ENCODE measurements at regions of chr1 and their contacts with region 1.

Region 1: GRCh38 chr1:110460253-110461220 is 9.6 kb downstream of the PROK1 start:
- DNase-seq: peak; percentile 89
- ATAC-seq: peak; percentile 90
- H3K4me3 Mint-ChIP-seq: no peak overlapping the region
- H3K27ac Mint-ChIP-seq: no peak overlapping the region
- H3K4me1 Mint-ChIP-seq: no peaks in the 10 kb centered on the region
- H3K27me3 Mint-ChIP-seq: peaks cover 2% of the 10 kb centered on the region

Region 2: GRCh38 chr1:110196917-110197765 is 263.4 kb before region 1 on chr1:
- CTCF ChIA-PET with region 1: interaction called, 88 read pairs
- DNase-seq: peak; percentile 68
- ATAC-seq: peak; percentile 92
- H3K4me3 Mint-ChIP-seq: no peak overlapping the region
- H3K27ac Mint-ChIP-seq: no peak overlapping the region
- H3K4me1 Mint-ChIP-seq: no peaks in the 10 kb centered on the region
- H3K27me3 Mint-ChIP-seq: no peaks in the 10 kb centered on the region

Region 3: DNA sequence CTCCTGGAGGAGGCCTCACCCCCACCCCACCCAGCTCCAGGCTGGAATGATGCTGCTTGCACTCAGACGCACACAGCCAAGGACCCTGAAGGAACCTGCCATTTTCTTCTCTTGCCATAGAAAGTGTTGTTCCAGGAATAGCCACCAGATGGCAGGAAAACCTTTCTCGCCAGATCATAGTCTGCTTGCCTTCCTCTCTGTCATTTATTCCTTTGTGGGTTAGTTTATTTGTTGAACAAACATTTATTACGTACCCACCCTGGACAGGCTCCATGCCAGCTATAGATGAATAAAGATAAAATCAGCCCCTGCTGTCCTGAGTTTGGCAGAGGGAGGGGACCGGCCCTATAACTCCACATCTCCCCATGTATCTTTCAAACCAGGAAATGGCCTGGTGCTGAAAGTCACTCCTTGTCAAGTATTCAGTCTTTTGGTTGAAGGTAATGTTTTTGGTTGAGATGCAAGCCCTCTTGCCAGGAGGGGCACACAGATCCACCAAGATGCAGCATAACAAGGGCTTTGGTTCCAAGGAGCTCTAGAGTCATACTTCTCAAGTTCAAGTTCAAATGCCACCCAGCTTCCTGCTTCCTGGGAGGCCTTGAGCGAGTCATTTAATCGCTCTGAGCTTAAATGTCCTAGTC is 257.4 kb before region 1 on chr1:
- CTCF ChIA-PET with region 1: interaction called, 125 read pairs
- DNase-seq: peak; percentile 82
- ATAC-seq: peak; percentile 64
- H3K4me3 Mint-ChIP-seq: no peak overlapping the region
- H3K27ac Mint-ChIP-seq: peak overlapping the region; percentile 86
- H3K4me1 Mint-ChIP-seq: peaks cover 15% of the 10 kb centered on the region
- H3K27me3 Mint-ChIP-seq: no peaks in the 10 kb centered on the region

Region 4: DNA sequence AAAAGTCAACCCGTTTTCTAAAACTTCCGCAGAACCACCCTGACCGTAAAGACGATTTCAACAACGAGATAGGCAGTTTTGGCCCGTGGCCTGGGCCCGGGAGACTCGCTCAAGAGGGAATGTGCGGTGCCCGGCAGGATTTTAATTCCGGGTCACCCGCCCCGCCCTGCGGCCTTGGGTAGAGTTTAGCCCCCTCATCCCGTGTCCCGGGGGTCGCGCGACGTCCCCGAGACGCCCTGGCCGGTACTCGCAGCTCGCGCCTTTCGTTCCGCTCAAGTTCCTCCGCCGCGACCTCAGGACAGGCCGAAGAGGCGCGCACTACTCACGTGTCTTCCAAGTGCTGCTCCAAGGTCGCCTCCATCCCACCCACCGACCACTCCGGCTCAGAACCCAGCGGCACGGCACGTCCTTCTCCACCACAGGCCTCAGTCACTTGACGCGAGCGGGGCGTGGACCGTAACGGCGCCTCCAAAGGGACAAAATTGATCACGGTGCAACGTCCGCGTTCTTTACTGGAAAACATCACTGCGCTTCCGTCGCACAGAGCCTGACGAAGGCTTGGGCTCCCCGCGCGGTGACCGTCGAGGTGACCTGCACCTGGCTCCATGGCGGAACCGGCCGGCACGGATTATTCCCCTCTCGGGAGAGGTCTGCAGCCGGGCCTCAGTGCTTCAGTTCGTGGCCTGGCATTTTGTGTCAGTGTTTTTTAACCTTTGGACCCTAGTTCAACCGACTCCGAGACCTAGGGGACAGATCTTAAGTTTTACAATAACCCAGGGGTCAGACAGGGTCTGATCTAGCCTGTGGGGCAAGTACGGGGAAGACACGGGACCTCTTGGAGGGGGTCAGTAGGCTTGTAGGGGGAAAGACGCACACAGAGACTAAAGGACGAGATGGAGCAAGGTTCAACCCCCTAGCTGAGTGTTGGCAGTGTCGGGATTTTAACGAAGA is 53.0 kb before region 1 on chr1 and contains the start of gene LAMTOR5:
- CTCF ChIA-PET with region 1: interaction called, 127 read pairs
- DNase-seq: peak; percentile 96
- ATAC-seq: peak; percentile 95
- H3K4me3 Mint-ChIP-seq: peak within 1 kb of the TSS; percentile 98
- H3K27ac Mint-ChIP-seq: peak within 1 kb of the TSS; percentile 98
- H3K4me1 Mint-ChIP-seq: peaks cover 25% of the 10 kb centered on the region
- H3K27me3 Mint-ChIP-seq: no peaks in the 10 kb centered on the region
- total RNA-seq, gene LAMTOR5: 109 to 130 TPM

Region 5: DNA sequence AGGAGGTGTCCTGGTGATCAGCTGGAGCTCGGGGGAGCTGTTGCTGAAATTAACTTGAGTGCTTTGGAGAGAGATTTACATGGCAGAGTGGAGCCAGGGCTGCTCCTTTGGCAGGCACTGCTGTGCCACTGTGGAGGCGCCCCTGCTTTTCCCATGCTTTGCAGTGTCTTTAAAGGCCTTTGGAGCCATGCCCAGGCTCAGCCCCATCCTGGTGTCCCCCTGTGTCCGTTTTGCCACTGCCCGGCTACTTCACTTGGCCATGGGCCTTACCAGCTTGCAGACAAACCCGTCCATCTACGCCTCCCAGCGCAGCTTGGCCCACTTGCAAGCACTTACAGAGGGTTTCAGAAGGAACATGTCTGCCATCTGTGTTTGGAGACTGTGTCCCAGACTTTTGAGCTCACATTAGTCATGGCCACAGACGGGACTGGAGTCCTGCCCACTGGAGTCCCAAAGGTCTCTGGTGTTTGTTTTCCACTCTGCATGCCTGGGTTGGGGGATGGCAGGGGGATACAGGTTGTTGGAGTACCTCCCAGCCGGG is 34.9 kb before region 1 on chr1:
- CTCF ChIA-PET with region 1: interaction called, 14 read pairs
- DNase-seq: no peak
- ATAC-seq: no peak
- H3K4me3 Mint-ChIP-seq: no peak overlapping the region
- H3K27ac Mint-ChIP-seq: no peak overlapping the region
- H3K4me1 Mint-ChIP-seq: peaks cover 14% of the 10 kb centered on the region
- H3K27me3 Mint-ChIP-seq: peaks cover 12% of the 10 kb centered on the region

Region 6: DNA sequence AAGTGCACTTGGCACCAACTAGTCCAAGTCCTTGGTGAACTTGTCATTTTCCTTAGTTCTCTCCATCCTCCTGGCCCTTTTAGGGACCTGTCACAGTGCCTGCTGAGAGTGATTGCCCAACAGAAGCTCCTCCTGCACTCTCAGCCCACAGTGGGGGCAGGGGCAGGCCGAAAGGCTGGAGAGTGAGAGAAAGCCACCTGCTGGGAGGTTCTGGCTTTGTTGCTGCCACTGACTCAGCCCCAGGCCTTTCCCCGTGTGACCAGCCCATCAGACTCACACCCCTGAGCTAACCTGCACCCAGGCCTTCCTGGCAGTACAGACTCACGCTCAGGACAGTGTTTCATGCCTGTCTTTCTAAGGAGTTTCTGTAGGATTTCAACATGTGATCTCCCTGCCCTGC is 26.7 kb before region 1 on chr1:
- CTCF ChIA-PET with region 1: interaction called, 11 read pairs
- DNase-seq: no peak
- ATAC-seq: no peak
- H3K4me3 Mint-ChIP-seq: no peak overlapping the region
- H3K27ac Mint-ChIP-seq: no peak overlapping the region
- H3K4me1 Mint-ChIP-seq: no peaks in the 10 kb centered on the region
- H3K27me3 Mint-ChIP-seq: peaks cover 9% of the 10 kb centered on the region